Dorsolateral prefrontal cortex (tissue), 120 donors: ENCODE measurements at regions of chr9 and their contacts with region 1.

Region 1: GRCh38 chr9:99140685-99141314 is 35.9 kb downstream of the TGFBR1 start:
- DNase-seq: peak in 5 of 10 donors; percentile 21 to 54 (median 43)
- H3K4me3 ChIP-seq: peak overlapping the region in 1 of 59 donors; percentile 8
- H3K27ac ChIP-seq: peak overlapping the region in 2 of 59 donors; percentile 15 to 19
- H3K27me3 ChIP-seq: no peaks in the 10 kb centered on the region
- CTCF ChIP-seq: peak; percentile 24 to 97 (median 87)

Region 2: DNA sequence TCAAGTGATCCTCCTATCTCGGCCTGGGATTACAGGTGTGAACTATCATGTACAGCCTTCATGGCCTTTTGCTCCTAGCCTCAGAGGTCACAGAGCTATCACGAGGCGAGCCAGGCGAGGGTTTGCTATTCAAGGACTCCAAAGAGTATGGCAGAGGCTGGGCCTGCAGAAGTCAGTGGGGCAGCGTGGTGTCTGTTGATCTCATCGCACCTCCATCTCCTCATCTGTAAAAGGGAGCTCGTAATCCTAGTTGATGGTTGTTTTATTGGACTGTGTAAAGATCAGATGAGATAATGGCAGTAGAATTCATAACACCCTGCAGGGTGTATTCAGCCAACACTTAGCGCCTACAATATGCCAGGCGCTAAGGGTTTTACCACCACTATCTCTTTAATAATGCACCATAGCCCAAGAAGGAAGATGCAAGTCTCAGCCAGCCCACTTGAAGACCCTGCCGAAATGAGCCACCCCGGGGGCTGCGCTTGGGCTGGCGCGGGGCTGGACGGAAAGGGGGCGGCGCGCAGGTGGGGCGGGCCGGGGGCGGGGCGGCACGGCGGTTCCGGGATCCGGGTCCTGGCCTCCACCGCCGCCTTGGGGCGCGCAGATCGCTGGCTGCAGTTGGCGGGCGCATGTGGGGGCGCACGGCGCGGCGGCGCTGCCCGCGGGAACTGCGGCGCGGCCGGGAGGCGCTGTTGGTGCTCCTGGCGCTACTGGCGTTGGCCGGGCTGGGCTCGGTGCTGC is 333.6 kb before region 1 on chr9 and contains the start of gene GALNT12:
- intact Hi-C with region 1: loop called in 1 of 2 experiments (anchors 5 kb)
- DNase-seq: peak in 8 of 10 donors; percentile 25 to 79 (median 50)
- H3K4me3 ChIP-seq: peak within 1 kb of the TSS; percentile 46 to 81 (median 65)
- H3K27ac ChIP-seq: peak within 1 kb of the TSS in 52 of 59 donors; percentile 1 to 82 (median 58)
- H3K27me3 ChIP-seq: no peaks in the 10 kb centered on the region
- CTCF ChIP-seq: peak in 16 of 56 donors; percentile 5 to 47 (median 18)
- total RNA-seq, gene GALNT12: 1.6 to 9.7 (median 3.9) TPM

Region 3: DNA sequence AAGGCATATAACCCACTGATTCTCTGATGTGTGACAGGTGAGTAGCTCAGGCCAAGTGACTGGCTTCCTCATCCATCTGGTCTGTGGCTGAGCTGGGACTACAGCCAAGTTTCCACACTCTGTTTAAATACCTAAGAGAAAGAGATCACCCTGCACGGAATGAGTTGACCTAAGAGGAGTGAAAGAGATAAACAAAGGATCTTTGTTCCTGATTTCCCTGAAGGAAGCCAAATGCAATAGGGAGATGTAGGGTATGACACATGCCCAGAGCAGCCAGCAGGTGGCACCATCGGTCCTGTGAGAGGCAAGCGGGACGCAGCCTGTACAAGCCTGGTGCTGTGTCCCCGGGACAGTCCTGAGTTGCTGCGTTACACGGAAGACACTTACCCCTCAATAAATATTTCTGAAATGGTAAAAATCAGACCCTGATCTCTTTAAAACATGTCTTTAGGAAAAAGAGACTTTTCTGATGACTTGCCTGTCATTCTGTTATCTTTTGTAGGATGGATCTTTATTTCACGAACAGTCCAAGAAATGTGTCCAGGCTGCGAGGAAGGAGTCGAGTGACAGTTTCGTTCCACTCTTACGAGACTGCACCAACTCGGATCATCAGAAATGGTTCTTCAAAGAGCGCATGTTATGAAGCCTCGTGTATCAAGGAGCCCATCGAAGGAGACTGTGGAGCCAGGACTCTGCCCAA is 292.2 kb before region 1 on chr9:
- intact Hi-C with region 1: loop called in 1 of 2 experiments (anchors 1 kb)
- DNase-seq: peak; percentile 90 to 95 (median 92)
- H3K4me3 ChIP-seq: peak overlapping the region in 57 of 59 donors; percentile 2 to 60 (median 39)
- H3K27ac ChIP-seq: peak overlapping the region in 13 of 59 donors; percentile 1 to 69 (median 33)
- H3K27me3 ChIP-seq: no peaks in the 10 kb centered on the region
- CTCF ChIP-seq: peak; percentile 80 to 99 (median 93)

Region 4: DNA sequence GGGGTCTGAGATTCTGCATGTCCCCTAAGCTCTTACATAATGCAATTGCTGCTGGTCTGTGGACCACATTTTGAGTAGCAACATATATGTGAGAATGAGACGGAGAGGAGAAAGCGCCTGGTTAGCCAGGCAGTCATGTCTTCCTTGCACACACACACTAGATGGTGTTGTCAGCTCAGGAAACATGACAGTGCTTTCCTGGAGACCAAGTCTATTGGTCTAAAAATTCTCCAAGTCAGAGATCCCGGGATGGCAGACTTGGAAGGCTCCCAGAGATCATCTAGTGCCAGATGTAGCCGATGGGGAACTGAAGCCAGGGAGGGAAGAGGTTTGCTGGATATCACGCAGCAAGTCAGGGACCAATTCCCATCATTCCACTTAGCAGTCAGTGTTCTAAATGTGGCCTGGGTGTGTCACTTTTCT is 279.9 kb before region 1 on chr9:
- intact Hi-C with region 1: loop called in 1 of 2 experiments (anchors 2 kb)
- DNase-seq: peak in 8 of 10 donors; percentile 23 to 69 (median 47)
- H3K4me3 ChIP-seq: no peak overlapping the region
- H3K27ac ChIP-seq: no peak overlapping the region
- H3K27me3 ChIP-seq: peaks cover 0 to 4% (median 0%) of the 10 kb centered on the region in 45 donors
- CTCF ChIP-seq: peak in 54 of 56 donors; percentile 31 to 84 (median 64)

Region 5: DNA sequence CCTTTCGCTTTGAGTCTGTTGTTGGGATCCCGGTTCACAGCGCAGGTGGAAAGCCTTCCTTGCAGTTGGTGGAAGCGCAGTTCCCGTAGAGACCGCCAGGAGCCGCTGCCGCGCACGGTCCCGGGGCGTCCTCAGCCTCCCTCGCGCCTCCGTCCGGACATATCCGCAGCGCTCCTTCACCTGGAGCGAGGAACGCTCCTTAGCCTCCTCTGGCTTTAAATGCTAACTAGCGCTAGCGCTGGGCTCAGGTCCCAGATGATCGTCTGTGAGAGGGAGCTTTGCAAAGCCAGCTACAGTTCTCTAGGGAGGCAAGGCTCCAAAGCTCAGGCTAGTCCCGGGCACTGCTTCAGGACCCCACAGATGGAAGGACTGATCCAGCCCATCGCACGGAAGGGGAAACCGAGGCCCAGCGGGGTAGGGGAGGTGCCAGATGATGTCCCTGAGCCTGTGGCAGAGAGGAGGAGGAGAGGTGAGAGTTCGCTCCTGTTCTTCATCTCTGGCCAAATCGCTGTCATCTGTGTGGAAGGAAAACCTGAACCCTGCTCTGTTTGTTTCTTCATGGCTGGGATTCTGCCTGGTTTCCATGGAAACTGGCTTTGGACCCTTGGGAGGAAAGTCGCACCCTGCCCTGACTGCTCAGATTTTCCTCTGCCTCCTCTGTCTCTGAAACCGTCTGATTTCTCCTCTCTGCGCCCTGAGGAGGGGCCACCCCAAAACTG is 165.6 kb before region 1 on chr9:
- intact Hi-C with region 1: loop called in 1 of 2 experiments (anchors 2 kb)
- DNase-seq: peak in 9 of 10 donors; percentile 69 to 88 (median 78)
- H3K4me3 ChIP-seq: peak overlapping the region in 57 of 59 donors; percentile 11 to 67 (median 44)
- H3K27ac ChIP-seq: peak overlapping the region in 1 of 59 donors; percentile 25
- H3K27me3 ChIP-seq: peaks cover 0 to 7% (median 0%) of the 10 kb centered on the region in 45 donors
- CTCF ChIP-seq: peak; percentile 69 to 99 (median 96)